Natural killer cell (primary cell): ENCODE measurements at regions of chr1 and their contacts with region 1.

Region 1: DNA sequence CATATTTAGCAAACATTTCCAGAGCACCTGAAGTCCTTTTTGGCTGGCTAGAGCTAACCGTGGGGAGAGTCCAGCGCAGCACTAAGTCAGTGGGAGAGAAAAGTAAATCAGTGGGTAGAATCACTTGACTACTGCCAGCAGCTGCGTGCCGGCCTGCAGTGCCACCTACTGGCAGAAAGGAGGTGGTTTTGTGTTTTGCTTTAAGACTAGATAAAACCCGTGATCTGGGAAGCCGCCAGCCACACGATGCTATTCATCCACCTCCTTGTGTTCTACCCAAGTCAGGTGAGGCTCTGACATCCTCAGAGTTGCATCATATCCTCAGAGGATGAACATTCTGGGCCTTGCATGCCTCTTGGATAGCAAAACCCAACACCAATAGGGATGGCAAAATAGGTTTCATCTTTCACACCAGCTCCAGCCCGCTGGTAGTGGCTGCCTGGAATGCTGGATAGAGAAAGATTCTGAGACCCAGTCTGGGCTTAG is 14.1 kb upstream of the HEYL start:
- DNase-seq: peak; percentile 51 to 85
- ATAC-seq: peak; percentile 67 to 82 (median 75)
- H3K4me3 ChIP-seq: no peak overlapping the region
- H3K4me3 Mint-ChIP-seq: no peak overlapping the region
- H3K27ac ChIP-seq: no peak overlapping the region
- H3K27ac Mint-ChIP-seq: no peak overlapping the region
- H3K4me1 ChIP-seq: peaks cover 7% of the 10 kb centered on the region
- H3K4me1 Mint-ChIP-seq: peaks cover 0 to 13% of the 10 kb centered on the region in 2 donors
- H3K27me3 ChIP-seq: no peaks in the 10 kb centered on the region
- H3K27me3 Mint-ChIP-seq: peaks cover 0 to 8% of the 10 kb centered on the region in 2 donors
- CTCF ChIP-seq: peak; percentile 87

Region 2: GRCh38 chr1:39509360-39510009 is 144.1 kb before region 1 on chr1:
- intact Hi-C with region 1: no loop called
- DNase-seq: no peak
- ATAC-seq: peak; percentile 43 to 63 (median 58)
- H3K4me3 ChIP-seq: no peak overlapping the region
- H3K4me3 Mint-ChIP-seq: peak overlapping the region; percentile 87
- H3K27ac ChIP-seq: no peak overlapping the region
- H3K27ac Mint-ChIP-seq: peak overlapping the region; percentile 34 to 76
- H3K4me1 ChIP-seq: peaks cover 27% of the 10 kb centered on the region
- H3K4me1 Mint-ChIP-seq: peaks cover 13 to 19% of the 10 kb centered on the region in 2 donors
- H3K27me3 ChIP-seq: peaks cover 3% of the 10 kb centered on the region
- H3K27me3 Mint-ChIP-seq: peaks cover 0 to 20% of the 10 kb centered on the region in 2 donors
- CTCF ChIP-seq: no peak

Region 3: GRCh38 chr1:39609618-39610331 is 43.8 kb before region 1 on chr1:
- intact Hi-C with region 1: loop called (anchors 1 kb)
- DNase-seq: peak; percentile 65 to 87
- ATAC-seq: peak; percentile 80 to 90 (median 83)
- H3K4me3 ChIP-seq: no peak overlapping the region
- H3K4me3 Mint-ChIP-seq: peak overlapping the region; percentile 35
- H3K27ac ChIP-seq: no peak overlapping the region
- H3K27ac Mint-ChIP-seq: no peak overlapping the region
- H3K4me1 ChIP-seq: peaks cover 7% of the 10 kb centered on the region
- H3K4me1 Mint-ChIP-seq: peaks cover 10% of the 10 kb centered on the region in 2 donors
- H3K27me3 ChIP-seq: peaks cover 2% of the 10 kb centered on the region
- H3K27me3 Mint-ChIP-seq: peaks cover 5 to 6% of the 10 kb centered on the region in 2 donors
- CTCF ChIP-seq: peak; percentile 80